Endothelial cell of umbilical vein (primary cell): ENCODE measurements at regions of chr12 and their contacts with region 1.

Region 1: DNA sequence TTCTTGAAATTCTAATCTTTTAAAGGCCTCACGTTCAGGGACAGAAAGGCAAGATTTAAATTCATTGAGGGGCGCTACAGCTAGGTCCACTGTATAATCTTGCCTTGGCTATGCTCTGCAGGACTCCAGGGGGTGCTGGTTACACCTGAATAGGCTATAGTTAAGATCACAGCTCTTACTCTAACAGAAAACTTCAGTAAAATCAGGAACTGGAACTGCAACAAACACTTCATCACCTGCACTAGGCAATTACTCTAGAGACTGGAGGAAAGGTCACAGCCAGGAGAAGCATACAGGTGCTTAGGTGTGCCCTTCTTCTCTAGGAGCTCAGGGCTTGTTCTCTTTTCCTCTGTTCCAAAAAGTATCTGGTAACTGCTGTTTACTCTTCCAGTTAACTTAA is 20.9 kb downstream of the SLCO1C1 start:
- DNase-seq: no peak
- H3K4me3 ChIP-seq: no peak overlapping the region
- H3K27ac ChIP-seq: no peak overlapping the region
- H3K4me1 ChIP-seq: no peaks in the 10 kb centered on the region
- H3K27me3 ChIP-seq: no peaks in the 10 kb centered on the region
- CTCF ChIP-seq: no peak
- POLR2A ChIP-seq: no peak

Region 2: DNA sequence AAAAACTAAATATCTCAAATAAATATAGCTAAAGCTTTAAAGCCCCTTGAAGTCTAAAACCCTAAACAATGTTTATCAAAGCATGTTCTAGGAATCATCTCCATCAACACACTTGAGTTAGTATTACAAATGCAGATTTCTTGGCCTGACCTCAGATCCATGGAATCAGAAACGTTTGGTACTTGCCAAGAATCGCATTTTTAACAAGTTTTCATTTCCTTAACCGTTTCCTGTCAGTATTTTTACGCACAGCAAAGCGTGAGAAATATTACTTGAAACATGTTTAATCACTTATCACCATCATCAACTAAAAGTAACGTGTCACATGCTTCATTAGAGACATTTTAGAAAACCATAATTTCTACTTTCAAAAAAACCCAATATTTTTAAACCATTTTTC is 11.2 kb before region 1 on chr12:
- CTCF ChIA-PET with region 1: interaction called, 27 read pairs
- POLR2A ChIA-PET with region 1: no interaction called
- dilution Hi-C with region 1: no loop called
- intact Hi-C with region 1: no loop called
- DNase-seq: peak; percentile 53
- H3K4me3 ChIP-seq: no peak overlapping the region
- H3K27ac ChIP-seq: no peak overlapping the region
- H3K4me1 ChIP-seq: peaks cover 6% of the 10 kb centered on the region
- H3K27me3 ChIP-seq: no peaks in the 10 kb centered on the region
- CTCF ChIP-seq: no peak
- POLR2A ChIP-seq: no peak